Esophagus squamous epithelium (tissue), 5 donors: ENCODE measurements at regions of chr17 and their contacts with region 1.

Region 1: GRCh38 chr17:6913608-6914443 is 82.0 kb upstream of the ALOX12 start:
- DNase-seq: no peak
- H3K4me3 ChIP-seq: peak overlapping the region in 3 of 4 donors; percentile 27 to 46 (median 28)
- H3K27ac ChIP-seq: no peak overlapping the region
- H3K4me1 ChIP-seq: peaks cover 3 to 13% (median 7%) of the 10 kb centered on the region in 3 donors
- H3K27me3 ChIP-seq: peaks cover 0 to 25% (median 0%) of the 10 kb centered on the region in 4 donors
- CTCF ChIP-seq: peak; percentile 61 to 81 (median 73)
- POLR2A ChIP-seq: no peak

Region 2: DNA sequence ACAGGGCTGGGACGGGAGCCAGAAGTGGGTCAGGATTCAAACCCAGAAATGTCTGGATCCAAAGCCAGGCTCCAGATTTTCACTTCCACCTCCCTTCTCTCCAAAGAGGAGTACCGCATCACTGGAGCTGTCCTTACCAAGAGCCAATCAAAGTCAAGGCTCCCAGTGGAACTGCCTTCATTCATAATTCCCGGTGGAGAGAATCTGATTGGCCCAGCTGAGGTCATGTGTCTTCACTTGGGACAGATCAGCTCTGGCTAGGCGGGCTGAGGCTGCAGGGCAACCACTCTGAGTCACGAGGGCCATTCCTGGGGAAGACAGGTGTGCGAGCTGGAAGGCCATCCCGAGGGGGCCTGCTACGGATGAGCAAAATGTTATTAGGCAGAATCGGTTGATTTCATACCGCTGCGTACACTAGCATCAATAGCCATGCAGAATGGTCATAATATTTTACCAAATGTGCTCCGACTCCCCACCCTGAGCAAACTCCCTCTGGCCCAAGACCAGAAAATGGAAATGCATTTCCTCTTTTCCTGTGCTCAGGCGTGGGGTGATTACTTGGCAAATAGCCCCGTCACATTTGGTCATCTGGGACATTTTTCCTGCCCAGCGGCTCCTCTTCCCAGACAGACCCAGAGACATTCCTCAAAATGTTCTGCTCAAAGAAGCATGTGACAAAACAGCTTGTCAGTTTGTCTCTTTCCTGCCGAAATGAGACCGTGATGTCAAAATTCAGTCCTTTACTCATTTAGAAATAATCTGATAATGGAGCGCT is 590.1 kb before region 1 on chr17:
- intact Hi-C with region 1: no loop called
- DNase-seq: no peak
- H3K4me3 ChIP-seq: no peak overlapping the region
- H3K27ac ChIP-seq: peak overlapping the region in 1 of 4 donors; percentile 21
- H3K4me1 ChIP-seq: peaks cover 0 to 4% (median 0%) of the 10 kb centered on the region in 3 donors
- H3K27me3 ChIP-seq: peaks cover 0 to 43% (median 0%) of the 10 kb centered on the region in 4 donors
- CTCF ChIP-seq: no peak
- POLR2A ChIP-seq: no peak

Region 3: DNA sequence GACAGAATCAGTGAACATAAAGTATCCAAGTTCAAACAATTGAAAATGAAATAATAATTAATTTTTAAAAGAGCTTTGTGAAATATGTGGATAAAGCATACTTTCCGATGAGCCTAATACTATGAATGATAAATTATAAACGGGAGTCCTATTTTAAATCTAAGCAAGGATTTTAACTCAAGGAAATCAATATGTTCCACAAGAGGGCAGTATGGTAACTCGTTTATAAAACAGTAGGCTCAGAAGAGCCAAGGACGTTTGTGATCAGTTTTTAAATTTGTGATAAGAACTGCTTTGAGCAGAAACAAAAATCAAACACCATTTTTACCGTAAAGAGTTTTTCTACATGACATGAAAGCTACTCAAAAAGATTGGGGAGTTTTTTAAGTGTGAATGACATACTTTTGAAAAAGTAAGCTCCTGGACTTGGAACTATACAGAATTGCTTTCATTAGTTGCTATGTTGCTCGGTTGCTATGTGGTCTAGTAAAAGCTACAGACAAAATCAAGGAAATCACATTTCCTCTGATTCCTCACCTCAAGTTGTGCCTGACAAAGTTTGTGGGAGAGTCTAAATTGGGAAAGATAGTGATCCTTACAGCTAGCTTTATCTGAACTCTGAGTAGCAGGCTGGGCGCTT is 70.5 kb before region 1 on chr17:
- intact Hi-C with region 1: loop called (anchors 5 kb)
- DNase-seq: no peak
- H3K4me3 ChIP-seq: no peak overlapping the region
- H3K27ac ChIP-seq: no peak overlapping the region
- H3K4me1 ChIP-seq: peaks cover 0 to 8% (median 0%) of the 10 kb centered on the region in 3 donors
- H3K27me3 ChIP-seq: peaks cover 0 to 49% (median 2%) of the 10 kb centered on the region in 4 donors
- CTCF ChIP-seq: peak; percentile 24 to 76 (median 59)
- POLR2A ChIP-seq: no peak

Region 4: DNA sequence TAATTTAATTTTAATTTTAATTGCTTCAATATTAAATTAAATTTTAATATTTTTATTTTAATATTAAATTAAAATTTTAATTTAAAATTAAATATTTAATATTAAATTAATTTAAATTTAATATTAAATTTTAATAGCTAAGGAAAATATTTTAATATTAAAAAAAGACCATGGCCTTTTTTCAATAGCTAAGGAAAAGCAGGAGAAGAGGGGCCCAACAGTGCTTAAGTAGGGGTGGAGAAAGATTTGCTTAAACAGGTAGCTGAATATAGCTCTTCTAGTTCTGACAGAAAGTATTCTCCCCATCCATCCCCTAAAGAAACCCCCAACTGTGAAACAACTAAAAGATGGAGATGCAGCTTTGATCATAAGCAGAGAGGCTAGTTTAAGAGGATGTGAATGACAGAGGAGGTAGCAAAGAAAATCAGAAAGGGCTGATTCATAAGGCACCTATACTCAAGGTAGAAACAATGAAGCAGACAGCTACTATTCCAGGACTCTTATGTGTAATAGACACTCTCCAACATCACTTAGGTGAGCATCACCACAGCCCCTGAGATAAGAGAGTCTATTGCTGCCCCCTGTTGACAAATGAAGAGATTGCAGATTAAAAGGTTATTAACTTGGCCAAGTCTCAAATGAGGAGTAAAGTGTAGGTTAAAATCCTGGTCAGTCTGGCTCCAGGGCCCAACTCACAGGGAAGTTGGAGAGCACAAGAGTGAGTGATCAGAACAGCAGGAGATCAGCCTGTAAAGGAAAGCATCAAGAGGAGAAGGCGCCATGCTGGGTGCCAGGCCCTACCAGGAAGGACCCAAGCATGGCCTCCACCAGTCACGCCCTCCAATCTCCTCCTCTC is 90.8 kb after region 1 on chr17:
- intact Hi-C with region 1: loop called (anchors 2 kb)
- DNase-seq: no peak
- H3K4me3 ChIP-seq: no peak overlapping the region
- H3K27ac ChIP-seq: peak overlapping the region in 1 of 4 donors; percentile 9
- H3K4me1 ChIP-seq: peaks cover 0 to 32% (median 0%) of the 10 kb centered on the region in 3 donors
- H3K27me3 ChIP-seq: no peaks in the 10 kb centered on the region
- CTCF ChIP-seq: peak; percentile 30 to 78 (median 64)
- POLR2A ChIP-seq: no peak

Region 5: DNA sequence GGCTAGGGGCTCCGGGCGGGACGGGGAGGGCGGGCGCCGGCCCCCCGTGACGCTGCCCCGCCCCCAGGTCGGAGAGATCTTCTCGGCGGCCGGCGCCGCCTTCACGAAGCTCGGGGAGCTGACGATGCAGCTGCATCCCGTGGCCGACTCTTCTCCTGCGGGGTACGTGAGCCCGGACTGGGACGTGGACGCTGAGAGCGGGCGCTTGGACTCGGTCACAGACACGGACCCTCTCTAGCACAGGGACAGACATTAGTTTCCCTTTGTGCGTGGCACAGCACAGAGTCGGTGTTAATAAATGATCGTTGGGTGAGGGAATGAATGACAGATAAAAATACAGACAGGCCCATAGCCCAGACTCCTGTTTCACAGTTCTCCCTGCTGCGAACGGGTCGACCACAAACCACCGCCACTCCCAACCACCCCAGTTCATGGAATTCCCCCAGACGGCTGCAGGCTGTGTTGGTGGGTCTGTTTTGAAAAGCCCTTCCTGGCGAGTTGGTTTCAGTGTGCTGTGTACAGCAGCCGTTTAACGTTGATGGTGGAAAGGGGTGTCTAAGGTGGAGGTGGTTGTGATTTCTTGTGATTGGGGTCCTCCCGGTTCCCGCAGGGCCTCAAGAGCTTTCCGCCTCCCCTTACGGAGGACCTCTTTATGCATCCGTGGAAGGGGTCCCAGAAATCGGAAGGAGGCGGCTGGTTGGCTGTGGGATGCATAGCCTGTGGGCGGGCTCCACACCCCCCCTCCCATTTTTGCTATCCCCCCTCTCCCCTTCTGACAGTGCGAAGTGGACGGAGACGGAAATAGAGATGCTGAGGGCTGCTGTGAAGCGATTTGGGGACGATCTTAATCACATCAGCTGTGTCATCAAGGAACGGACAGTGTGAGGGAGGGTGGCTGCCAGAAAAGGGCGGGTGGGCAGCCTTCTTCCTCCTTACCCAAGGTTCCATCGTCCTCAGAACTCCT is 101.5 kb after region 1 on chr17:
- intact Hi-C with region 1: no loop called
- DNase-seq: no peak
- H3K4me3 ChIP-seq: peak overlapping the region; percentile 87 to 95 (median 90)
- H3K27ac ChIP-seq: peak overlapping the region; percentile 94 to 98 (median 98)
- H3K4me1 ChIP-seq: peaks cover 36 to 85% (median 37%) of the 10 kb centered on the region in 3 donors
- H3K27me3 ChIP-seq: no peaks in the 10 kb centered on the region
- CTCF ChIP-seq: no peak
- POLR2A ChIP-seq: peak in 2 of 4 donors; percentile 73 to 75

Region 6: DNA sequence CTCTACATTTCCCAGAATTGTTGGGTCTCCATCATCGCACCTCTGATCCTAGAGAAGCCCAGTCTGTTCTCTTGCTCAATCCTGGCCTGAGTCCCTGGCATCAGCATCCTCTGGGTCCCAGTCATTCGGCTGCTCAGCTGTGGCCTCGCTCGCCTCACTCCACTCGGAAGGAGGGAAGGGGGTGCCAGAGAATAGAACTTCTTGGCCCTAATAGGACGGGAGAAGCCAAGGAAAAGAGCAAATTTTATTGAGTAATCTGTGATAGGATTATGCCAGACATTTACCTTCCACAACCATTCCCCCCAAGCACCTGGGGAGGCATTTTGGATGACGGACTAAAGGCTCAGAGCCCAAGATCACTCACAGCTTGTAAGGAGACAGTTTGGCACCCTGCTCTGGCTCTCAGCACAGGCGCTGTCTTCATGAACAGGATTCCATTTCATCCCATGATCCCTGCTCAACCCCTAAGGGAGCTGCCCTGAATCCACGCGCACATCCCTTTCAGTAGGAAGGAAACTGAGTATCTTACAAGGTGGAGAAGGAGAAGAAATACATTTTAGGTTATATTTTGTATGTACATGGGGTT is 166.7 kb after region 1 on chr17:
- intact Hi-C with region 1: no loop called
- DNase-seq: no peak
- H3K4me3 ChIP-seq: no peak overlapping the region
- H3K27ac ChIP-seq: peak overlapping the region in 2 of 4 donors; percentile 45 to 59
- H3K4me1 ChIP-seq: peaks cover 0 to 26% (median 0%) of the 10 kb centered on the region in 3 donors
- H3K27me3 ChIP-seq: peaks cover 0 to under 1% (median 0%) of the 10 kb centered on the region in 4 donors
- CTCF ChIP-seq: no peak
- POLR2A ChIP-seq: no peak

Region 7: DNA sequence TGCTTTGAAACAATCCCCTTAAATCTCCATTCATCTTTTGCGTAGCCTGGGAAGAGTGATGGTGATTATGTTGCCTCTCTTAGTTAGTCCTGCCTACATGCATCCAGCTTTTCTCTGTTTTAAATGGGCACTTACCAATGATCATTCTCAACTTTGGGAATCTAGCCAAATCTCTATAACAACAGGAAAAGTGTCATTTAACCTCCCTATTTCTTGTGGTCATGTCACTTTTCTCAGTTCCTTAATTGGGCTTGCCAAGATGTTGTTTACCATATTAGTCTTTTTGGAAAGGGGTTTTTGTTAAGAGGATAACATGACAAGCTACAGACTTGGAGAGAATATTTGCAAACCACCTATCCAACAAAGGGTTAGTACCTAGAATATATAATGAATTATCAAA is 181.8 kb after region 1 on chr17:
- intact Hi-C with region 1: no loop called
- DNase-seq: no peak
- H3K4me3 ChIP-seq: no peak overlapping the region
- H3K27ac ChIP-seq: no peak overlapping the region
- H3K4me1 ChIP-seq: no peaks in the 10 kb centered on the region
- H3K27me3 ChIP-seq: peaks cover 0 to 2% (median 0%) of the 10 kb centered on the region in 4 donors
- CTCF ChIP-seq: no peak
- POLR2A ChIP-seq: no peak